SK-N-SH (cell line): ENCODE measurements at regions of chr12 and their contacts with region 1.

Region 1: GRCh38 chr12:54359033-54359761 is 5.1 kb downstream of the GPR84 start:
- DNase-seq: peak; percentile 91
- H3K4me3 ChIP-seq: peak overlapping the region; percentile 55 to 76
- H3K27ac ChIP-seq: peak overlapping the region; percentile 79 to 99
- H3K4me1 ChIP-seq: peaks cover 27 to 47% of the 10 kb centered on the region in 2 experiments
- H3K27me3 ChIP-seq: no peaks in the 10 kb centered on the region
- CTCF ChIP-seq: no peak
- EP300 ChIP-seq: peak; percentile 68 to 89; a peak in 3 of 4 replicates
- RAD21 ChIP-seq: no peak

Region 2: GRCh38 chr12:54229624-54230212 is 129.5 kb before region 1 on chr12:
- CTCF ChIA-PET with region 1: interaction called, 11 read pairs
- POLR2A ChIA-PET with region 1: no interaction called
- DNase-seq: no peak
- H3K4me3 ChIP-seq: no peak overlapping the region
- H3K27ac ChIP-seq: peak overlapping the region; percentile 36 to 88; a peak in 3 of 4 replicates
- H3K4me1 ChIP-seq: peaks cover 2 to 17% of the 10 kb centered on the region in 2 experiments; a peak in 3 of 4 replicates
- H3K27me3 ChIP-seq: no peaks in the 10 kb centered on the region
- CTCF ChIP-seq: no peak
- EP300 ChIP-seq: peak in 1 of 2 experiments; percentile 35; a peak in 1 of 4 replicates
- RAD21 ChIP-seq: no peak

Region 3: GRCh38 chr12:54279866-54280467 is 79.2 kb before region 1 on chr12 and contains the start of gene CBX5:
- CTCF ChIA-PET with region 1: interaction called, 33 read pairs
- POLR2A ChIA-PET with region 1: interaction called, 20 read pairs
- DNase-seq: peak; percentile 92
- H3K4me3 ChIP-seq: peak within 1 kb of the TSS; percentile 80 to 88
- H3K27ac ChIP-seq: peak within 1 kb of the TSS; percentile 93 to 99
- H3K4me1 ChIP-seq: peaks cover 15 to 26% of the 10 kb centered on the region in 2 experiments; a peak in 3 of 4 replicates
- H3K27me3 ChIP-seq: no peaks in the 10 kb centered on the region
- CTCF ChIP-seq: no peak
- EP300 ChIP-seq: peak in 1 of 2 experiments; percentile 4; a peak in 1 of 4 replicates
- RAD21 ChIP-seq: no peak
- polyA plus RNA-seq, gene CBX5: 11.6 and 14.1 TPM in 2 replicates

Region 4: DNA sequence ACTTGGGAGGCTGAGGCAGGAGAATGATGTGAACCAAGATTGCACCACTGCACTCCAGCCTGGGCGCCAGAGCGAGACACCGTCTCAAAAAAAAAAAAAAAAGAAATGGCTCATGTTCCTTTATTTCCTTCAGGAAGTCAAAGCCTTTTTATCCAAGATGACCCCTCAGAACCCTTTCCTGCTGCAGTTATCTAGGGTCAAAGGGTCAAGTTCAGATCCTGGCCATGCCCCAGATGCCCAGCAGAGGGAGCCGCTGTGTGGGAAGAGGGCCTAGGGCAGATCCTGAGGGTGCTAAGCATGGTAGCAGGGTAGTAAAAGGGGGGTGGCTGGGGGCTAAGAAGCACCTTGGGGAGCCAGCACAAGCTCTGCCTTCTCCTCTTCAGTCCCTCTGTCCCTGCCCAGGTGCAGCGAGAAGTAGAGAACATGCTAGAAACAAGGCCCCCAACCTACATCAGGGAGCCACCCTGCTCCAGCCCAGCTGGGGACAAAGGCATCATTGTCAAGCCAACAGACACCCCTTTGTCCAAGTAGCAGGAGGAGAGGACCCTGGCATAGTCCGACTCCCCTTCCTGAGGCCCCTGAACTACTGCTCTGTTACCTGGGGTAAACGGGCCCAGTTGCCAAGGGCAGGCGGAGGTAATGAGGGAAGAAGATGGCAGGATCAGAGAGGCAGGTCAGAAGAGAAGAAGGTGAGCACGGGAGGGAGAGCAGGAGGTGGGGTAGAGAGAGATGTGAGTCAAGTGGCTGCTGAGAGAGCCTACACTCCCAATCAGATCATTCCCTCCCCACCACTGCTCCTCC is 64.8 kb before region 1 on chr12:
- CTCF ChIA-PET with region 1: interaction called, 86 read pairs
- POLR2A ChIA-PET with region 1: no interaction called
- DNase-seq: peak; percentile 71
- H3K4me3 ChIP-seq: peak overlapping the region in 1 of 2 experiments; percentile 40; a peak in 1 of 4 replicates
- H3K27ac ChIP-seq: no peak overlapping the region
- H3K4me1 ChIP-seq: peaks cover 0 to 2% of the 10 kb centered on the region in 2 experiments; a peak in 1 of 4 replicates
- H3K27me3 ChIP-seq: no peaks in the 10 kb centered on the region
- CTCF ChIP-seq: peak; percentile 76
- EP300 ChIP-seq: no peak
- RAD21 ChIP-seq: peak; percentile 61

Region 5: DNA sequence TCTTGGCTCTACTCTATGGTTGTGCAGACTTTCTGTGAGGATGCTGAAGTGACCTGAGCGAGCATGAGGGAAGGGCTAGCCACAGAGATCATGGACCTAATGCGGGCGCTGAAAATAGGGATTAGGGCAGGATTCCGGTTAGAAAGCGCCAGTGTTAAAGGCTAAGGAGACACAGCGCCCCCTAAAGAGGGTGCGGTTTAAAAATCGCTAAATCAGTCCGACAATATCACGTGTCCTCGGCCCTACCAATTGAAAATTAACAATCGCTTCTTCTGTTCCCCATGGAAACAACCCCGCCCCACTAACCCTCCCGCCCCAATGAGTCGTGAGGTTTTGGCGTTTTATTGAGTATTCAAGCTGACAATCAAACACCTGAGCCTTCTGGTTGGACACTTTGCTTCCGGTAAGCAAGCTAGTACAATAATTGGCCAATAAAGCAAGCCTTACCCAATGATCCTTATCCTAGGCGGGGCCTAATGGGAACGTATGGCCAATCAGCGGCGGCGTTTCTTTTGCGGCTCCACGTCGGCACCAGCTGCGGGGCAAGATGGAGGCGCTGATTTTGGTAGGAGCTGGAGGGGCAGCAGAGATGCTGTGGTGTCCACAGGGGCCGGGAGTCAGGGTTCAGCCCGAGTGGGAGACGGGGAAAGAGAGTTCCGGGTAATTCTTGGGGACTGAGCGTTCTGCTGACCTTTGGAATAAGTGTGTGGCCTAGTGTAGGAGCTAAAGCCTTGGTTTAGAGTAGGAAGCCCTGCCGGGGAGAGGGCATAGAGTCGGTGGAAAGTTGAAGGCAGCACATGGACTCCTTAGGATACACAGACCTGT is 34.4 kb before region 1 on chr12 and contains the start of gene COPZ1:
- CTCF ChIA-PET with region 1: interaction called, 266 read pairs
- POLR2A ChIA-PET with region 1: interaction called, 5 read pairs
- DNase-seq: peak; percentile 90
- H3K4me3 ChIP-seq: peak within 1 kb of the TSS; percentile 68 to 86
- H3K27ac ChIP-seq: peak within 1 kb of the TSS; percentile 77 to 81
- H3K4me1 ChIP-seq: peaks cover 0 to 9% of the 10 kb centered on the region in 2 experiments; a peak in 2 of 4 replicates
- H3K27me3 ChIP-seq: no peaks in the 10 kb centered on the region
- CTCF ChIP-seq: peak; percentile 84
- EP300 ChIP-seq: 0 out of 4 replicates have a peak, but pooled peaks of 1 of the 2 experiments have one; percentile 35
- RAD21 ChIP-seq: peak; percentile 80
- polyA plus RNA-seq, gene COPZ1: 111 and 156 TPM in 2 replicates

Region 6: GRCh38 chr12:54431911-54432814 is 73.0 kb after region 1 on chr12:
- CTCF ChIA-PET with region 1: no interaction called
- POLR2A ChIA-PET with region 1: no interaction called
- DNase-seq: no peak
- H3K4me3 ChIP-seq: no peak overlapping the region
- H3K27ac ChIP-seq: no peak overlapping the region
- H3K4me1 ChIP-seq: peaks cover 0 to 10% of the 10 kb centered on the region in 2 experiments; a peak in 2 of 4 replicates
- H3K27me3 ChIP-seq: no peaks in the 10 kb centered on the region
- CTCF ChIP-seq: no peak
- EP300 ChIP-seq: no peak
- RAD21 ChIP-seq: no peak